HEK293T (cell line): ENCODE measurements at regions of chr11 and their contacts with region 1.

Region 1: GRCh38 chr11:67317205-67317887 is 14.0 kb downstream of the SSH3 start:
- DNase-seq: peak; percentile 98

Region 2: GRCh38 chr11:66996609-66997405 is 320.5 kb before region 1 on chr11:
- CTCF ChIA-PET with region 1: no interaction called
- POLR2A ChIA-PET with region 1: no interaction called
- DNase-seq: no peak

Region 3: GRCh38 chr11:67239783-67240575 is 77.4 kb before region 1 on chr11:
- CTCF ChIA-PET with region 1: interaction called, 7 read pairs
- POLR2A ChIA-PET with region 1: interaction called, 10 read pairs
- DNase-seq: peak; percentile 94

Region 4: GRCh38 chr11:67262731-67263675 is 54.3 kb before region 1 on chr11:
- CTCF ChIA-PET with region 1: interaction called, 22 read pairs
- POLR2A ChIA-PET with region 1: interaction called, 28 read pairs
- DNase-seq: peak; percentile 85

Region 5: DNA sequence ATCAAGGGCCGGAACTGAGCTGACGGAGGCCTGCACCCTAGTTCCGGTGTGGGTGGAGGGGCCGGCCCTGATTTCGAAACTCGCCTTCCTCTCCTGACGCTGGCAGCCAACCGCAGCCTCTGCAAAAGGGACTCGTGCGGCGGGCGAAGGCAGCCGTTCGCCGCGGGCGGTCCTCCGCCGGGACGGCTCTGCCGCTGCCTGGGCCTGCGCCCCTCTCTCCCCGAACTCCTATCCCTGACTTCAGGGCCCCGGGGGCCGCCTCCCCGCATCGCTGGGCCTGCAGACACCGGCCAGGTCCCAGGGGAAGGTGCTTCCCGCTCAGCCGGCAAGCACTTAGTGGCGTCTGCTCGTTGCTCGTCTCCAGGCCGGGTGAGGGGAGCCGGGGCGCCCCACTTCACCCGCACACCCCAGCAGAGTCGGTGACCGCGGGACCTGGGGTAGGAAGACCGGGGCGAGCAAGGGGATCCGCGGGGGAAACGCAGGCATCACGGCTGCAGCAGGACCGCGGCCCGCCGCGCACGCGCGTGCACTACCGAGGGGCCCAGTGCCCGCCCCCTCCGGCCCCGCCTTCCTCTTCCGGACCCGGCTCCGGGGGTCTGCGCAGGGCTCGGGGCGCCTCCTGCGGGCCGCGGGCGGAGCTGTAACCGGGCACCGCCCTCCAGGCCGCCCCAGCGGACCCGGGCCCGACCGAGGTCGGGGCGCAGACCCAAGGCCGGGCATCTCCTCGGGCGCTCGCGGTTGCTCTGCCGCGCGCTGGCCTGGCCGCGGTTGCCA is 28.7 kb before region 1 on chr11:
- CTCF ChIA-PET with region 1: interaction called, 3 read pairs
- POLR2A ChIA-PET with region 1: interaction called, 23 read pairs
- DNase-seq: peak; percentile 88

Region 6: DNA sequence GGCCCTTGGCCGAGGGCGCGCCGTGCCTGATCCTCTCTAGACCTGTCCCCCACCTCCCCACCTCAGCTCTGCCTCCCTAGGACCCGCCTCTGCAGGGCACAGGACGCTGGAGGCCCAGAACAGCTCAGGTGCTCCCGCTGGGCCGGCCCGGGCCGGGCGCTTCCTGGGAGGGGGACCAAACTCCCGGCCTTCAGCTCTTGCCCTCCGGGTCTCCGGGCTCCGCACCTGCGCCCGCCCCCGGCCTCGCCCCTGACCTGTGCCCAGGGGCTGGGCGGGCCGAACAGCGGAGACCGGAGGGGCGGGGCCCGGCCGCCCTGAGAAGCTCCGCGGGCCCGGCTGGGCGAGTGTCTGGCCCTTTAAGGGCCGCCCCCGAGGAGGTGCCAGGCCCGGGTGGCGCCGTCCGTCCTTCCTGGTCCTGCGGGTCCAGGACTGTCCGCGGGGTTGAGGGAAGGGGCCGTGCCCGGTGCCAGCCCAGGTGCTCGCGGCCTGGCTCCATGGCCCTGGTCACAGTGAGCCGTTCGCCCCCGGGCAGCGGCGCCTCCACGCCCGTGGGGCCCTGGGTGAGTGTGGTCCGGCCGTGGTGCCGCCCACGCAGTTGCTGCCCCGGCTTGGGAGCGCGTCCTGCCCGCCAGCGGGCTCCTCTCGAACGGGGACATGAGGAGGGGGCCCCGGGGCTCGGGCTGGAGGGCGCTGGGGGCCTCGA is 14.1 kb before region 1 on chr11 and contains the start of gene SSH3:
- CTCF ChIA-PET with region 1: interaction called, 5 read pairs
- POLR2A ChIA-PET with region 1: interaction called, 25 read pairs
- DNase-seq: peak; percentile 68

Region 7: DNA sequence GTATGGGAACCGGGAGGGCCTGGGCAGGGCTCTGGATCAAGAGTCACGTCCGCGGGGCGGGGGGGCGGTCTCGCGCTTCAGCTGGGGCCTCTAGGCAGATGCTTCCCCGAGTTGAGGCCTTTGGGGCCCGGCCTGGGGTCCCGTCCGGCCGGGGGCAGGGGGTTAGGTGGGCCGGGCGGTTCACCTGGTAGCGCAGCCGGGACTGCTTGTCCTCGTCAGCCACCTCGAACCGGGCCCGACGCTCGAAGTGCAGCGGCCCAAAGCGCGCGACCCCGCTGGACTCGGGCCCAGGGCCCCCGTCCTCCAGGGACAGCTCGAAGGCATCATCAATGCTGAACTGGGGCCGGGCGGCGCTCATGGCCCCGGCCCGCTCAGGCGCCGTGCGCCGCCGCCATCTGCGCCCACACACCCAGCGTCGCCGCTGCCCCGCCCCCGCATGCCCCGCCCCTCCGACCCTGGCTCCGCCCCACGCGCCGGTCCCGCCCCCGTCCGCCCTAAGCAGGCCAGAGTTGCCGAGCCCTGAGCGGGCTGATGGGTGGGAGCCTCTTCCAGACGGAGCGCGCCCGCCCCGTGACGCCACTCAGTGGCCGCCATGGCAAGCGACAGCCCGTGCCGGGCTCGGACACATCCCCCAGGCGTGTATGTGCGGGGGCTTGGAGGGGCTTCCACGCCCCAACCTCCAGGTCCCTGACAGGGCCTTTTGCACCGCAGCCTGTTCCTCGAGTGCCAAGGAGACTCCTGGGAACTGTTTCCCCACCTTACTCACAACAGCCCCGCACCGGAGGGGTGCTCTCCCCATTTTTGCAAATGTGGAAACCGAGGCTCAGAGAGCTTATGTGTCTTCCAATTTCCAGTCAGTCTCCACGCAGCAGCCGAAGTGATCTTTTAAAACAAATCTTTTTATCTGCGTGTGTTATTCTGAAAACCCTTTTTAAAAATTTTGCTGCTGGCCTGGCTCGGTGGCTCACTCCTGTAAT is 151.8 kb after region 1 on chr11 and contains the start of gene TMEM134:
- CTCF ChIA-PET with region 1: no interaction called
- POLR2A ChIA-PET with region 1: no interaction called
- DNase-seq: peak; percentile 97